Heart left ventricle (tissue), 16 donors: ENCODE measurements at regions of chr16 and their contacts with region 1.

Region 1: GRCh38 chr16:55824473-55825000 is 8.4 kb downstream of the CES1 start:
- DNase-seq: no peak
- ATAC-seq: no peak
- H3K4me3 ChIP-seq: no peak overlapping the region
- H3K27ac ChIP-seq: no peak overlapping the region
- H3K4me1 ChIP-seq: no peaks in the 10 kb centered on the region
- H3K27me3 ChIP-seq: peaks cover 0 to 12% (median 0%) of the 10 kb centered on the region in 9 donors
- CTCF ChIP-seq: no peak
- POLR2A ChIP-seq: no peak

Region 2: GRCh38 chr16:55735120-55735781 is 89.3 kb before region 1 on chr16:
- intact Hi-C with region 1: loop called in 1 of 10 experiments (anchors 10 kb)
- DNase-seq: no peak
- ATAC-seq: no peak
- H3K4me3 ChIP-seq: no peak overlapping the region
- H3K27ac ChIP-seq: no peak overlapping the region
- H3K4me1 ChIP-seq: no peaks in the 10 kb centered on the region
- H3K27me3 ChIP-seq: peaks cover 0 to 40% (median 14%) of the 10 kb centered on the region in 9 donors
- CTCF ChIP-seq: no peak
- POLR2A ChIP-seq: no peak